ENCODE measurements at regions of chr4 and their contacts with region 1.

Region 1: GRCh38 chr4:139656614-139657486 is 8.8 kb upstream of the MGST2 start:
- DNase-seq: peak; percentile 62
- H3K4me3 Mint-ChIP-seq: peak overlapping the region; percentile 58
- H3K27ac Mint-ChIP-seq: peak overlapping the region; percentile 87
- H3K4me1 Mint-ChIP-seq: peaks cover 30% of the 10 kb centered on the region
- H3K27me3 Mint-ChIP-seq: peaks cover 10% of the 10 kb centered on the region

Region 2: DNA sequence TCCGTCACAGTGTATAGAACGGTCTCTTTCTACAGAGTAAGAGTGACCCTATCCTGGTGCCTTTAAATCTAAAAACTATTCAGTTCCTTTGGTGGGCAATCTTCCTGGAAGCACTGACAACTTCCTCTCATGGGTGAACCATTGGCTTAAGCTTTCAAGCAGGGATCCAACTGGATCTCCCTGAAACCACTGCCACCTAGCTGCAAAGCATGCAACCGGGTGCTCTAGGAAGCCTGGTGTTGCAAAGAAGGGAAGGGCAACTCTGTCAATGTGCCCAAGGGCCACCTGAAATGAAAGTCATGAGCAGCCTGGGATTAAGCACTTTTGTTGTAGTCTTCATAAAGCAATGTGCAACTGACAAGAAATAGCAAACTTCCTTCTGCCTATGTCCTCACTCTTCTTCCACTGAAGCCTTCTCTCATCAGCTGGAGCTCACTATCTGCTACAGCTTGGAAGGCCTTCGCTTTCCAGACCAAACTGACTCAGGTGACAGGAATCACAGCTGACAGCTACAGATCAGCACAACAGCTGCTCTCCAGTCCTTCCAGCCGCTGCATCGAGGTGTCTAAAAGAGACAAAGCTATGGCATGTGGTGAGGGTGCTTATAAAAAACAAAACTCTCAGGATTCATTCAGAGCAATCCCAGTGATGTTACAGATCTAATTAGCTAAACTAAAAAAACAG is 147.0 kb before region 1 on chr4:
- CTCF ChIA-PET with region 1: no interaction called
- DNase-seq: peak; percentile 27
- H3K4me3 Mint-ChIP-seq: no peak overlapping the region
- H3K27ac Mint-ChIP-seq: no peak overlapping the region
- H3K4me1 Mint-ChIP-seq: no peaks in the 10 kb centered on the region
- H3K27me3 Mint-ChIP-seq: no peaks in the 10 kb centered on the region

Region 3: DNA sequence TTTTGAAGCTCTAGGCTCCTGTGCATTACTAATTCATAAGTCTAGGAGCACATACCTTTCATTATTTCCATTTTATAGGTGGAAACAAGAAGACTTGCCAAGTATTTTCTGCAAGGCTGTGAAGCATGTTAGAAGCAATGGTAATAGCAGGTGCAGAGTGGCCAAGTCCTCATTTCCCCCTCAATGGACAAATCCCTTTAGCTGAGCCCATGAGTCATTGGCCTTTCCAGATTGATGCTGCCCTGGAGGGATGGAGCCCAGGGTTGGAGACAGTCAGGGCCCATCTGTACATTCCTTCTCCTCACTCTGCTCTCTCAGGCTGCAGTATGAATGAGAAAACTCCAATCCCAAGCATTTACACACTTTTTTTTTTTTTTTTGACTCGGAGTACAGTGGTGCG is 15.4 kb after region 1 on chr4:
- CTCF ChIA-PET with region 1: interaction called, 41 read pairs
- DNase-seq: no peak
- H3K4me3 Mint-ChIP-seq: no peak overlapping the region
- H3K27ac Mint-ChIP-seq: no peak overlapping the region
- H3K4me1 Mint-ChIP-seq: peaks cover 12% of the 10 kb centered on the region
- H3K27me3 Mint-ChIP-seq: no peaks in the 10 kb centered on the region

Region 4: DNA sequence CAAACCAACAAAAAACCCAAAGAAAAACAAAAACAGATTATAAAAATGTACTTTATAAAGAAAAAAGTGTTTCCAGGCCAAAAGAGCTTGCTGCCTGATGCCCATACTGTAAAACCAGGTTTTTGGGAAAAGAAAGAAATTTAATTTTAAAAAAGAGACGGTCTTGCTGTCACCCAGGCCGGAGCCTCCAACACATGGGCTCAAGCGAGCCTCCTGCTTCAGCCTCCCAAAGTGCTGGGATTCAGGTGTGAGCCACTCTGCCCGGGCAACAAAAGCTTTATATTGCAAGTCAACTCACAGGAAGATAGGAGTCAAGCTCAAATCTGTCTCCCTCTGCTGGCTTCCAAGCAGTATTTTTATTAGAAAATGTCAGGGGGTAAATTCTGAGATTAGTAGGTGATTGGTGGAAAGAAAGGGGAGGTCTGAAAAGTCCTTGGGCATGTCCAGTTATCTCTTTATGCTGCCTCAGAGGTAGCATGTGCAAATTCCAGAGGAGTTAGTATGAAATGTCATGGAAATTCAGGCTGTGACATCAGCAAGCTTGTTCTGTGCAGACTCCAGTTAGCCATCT is 48.1 kb after region 1 on chr4:
- CTCF ChIA-PET with region 1: interaction called, 58 read pairs
- DNase-seq: no peak
- H3K4me3 Mint-ChIP-seq: no peak overlapping the region
- H3K27ac Mint-ChIP-seq: no peak overlapping the region
- H3K4me1 Mint-ChIP-seq: no peaks in the 10 kb centered on the region
- H3K27me3 Mint-ChIP-seq: no peaks in the 10 kb centered on the region

Region 5: DNA sequence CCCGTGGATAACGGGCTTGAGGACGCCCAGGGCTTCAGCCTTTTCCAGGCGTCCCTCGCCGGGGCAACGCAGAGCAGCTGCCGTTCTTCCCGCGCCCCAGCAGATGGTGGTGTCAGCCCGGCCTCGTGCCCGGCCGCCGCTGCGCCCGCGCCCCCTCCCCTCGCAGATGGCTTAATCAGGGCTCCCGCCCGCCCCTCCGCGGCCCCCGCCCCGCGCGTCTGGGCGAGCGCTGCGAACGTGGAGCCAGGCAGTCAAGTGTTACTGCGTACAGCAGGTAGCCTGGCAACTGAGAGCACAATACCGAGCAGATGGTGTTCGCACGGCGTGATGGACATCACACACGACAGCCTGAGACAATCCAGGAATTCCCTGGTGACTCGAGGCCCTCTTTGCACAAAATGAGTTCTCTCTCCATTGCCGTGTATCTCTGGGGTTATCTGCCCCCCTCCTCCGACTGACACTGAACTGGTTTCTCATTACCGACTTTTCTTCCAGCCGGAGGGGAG is 78.1 kb after region 1 on chr4:
- CTCF ChIA-PET with region 1: interaction called, 11 read pairs
- DNase-seq: peak; percentile 68
- H3K4me3 Mint-ChIP-seq: peak overlapping the region; percentile 55
- H3K27ac Mint-ChIP-seq: no peak overlapping the region
- H3K4me1 Mint-ChIP-seq: peaks cover 15% of the 10 kb centered on the region
- H3K27me3 Mint-ChIP-seq: peaks cover 64% of the 10 kb centered on the region